ENCODE measurements at regions of chr3 and their contacts with region 1.

Region 1: GRCh38 chr3:141454906-141455430 is 31.9 kb upstream of the RASA2 start:
- DNase-seq: no peak
- ATAC-seq: peak; percentile 72

Region 2: GRCh38 chr3:141308631-141309085 is 146.3 kb before region 1 on chr3:
- intact Hi-C with region 1: loop called (anchors 5 kb)
- DNase-seq: no peak
- ATAC-seq: no peak

Region 3: DNA sequence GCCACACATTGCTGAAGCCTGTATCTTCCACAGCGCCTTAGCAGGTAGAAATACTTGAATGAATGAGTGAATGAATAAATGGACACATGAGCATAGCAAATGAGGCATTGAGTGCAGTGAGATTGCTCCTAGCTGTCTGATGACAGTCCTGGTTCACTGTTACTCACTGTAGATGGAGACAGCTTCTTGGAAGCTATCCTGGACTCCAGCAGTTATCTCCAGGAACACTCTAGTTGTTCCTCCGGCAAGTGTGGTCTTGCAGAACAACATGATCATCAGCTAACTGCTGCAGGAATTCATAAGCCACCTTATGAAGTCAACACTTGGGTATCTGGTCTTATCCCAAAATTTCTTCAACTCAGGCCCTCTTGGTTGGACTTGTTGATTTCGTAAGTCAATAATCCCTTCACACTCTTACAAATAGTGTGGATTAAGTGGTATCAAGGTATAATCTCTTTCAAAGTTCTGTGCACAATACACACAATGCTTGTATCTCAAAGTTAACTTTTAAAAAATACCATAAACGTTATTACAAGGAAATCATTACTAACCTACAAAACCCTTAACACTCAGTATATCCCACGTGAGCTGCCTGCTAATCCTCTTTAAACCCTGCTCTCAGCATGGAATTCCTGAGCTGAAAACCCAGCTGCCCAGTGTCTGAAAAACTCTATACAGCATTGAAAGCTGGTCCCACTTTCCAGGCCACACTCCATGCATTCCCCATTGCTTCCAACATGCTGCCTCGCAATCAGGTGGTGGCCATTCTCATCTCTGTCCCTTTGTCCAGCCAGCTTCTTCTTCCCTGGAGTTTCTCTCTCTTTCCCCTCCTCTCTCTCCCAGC is 101.1 kb before region 1 on chr3:
- intact Hi-C with region 1: loop called (anchors 5 kb)
- DNase-seq: no peak
- ATAC-seq: no peak